H1 (cell line): ENCODE measurements at regions of chr12 and their contacts with region 1.

Region 1: GRCh38 chr12:124140944-124141486 is 153.9 kb upstream of the RFLNA start:
- DNase-seq: peak in 1 of 2 experiments; percentile 53
- H3K4me3 ChIP-seq: peak overlapping the region in 1 of 4 experiments; percentile 31; a peak in 2 of 8 replicates
- H3K27ac ChIP-seq: peak overlapping the region; percentile 79
- H3K4me1 ChIP-seq: peaks cover 5 to 27% (median 15%) of the 10 kb centered on the region in 4 experiments; a peak in 5 of 7 replicates
- H3K27me3 ChIP-seq: no peaks in the 10 kb centered on the region
- CTCF ChIP-seq: no peak
- EP300 ChIP-seq: peak in 1 of 2 experiments; percentile 89; a peak in 1 of 3 replicates
- POLR2A ChIP-seq: peak in 1 of 2 experiments; percentile 68; a peak in 2 of 3 replicates
- RAD21 ChIP-seq: peak in 1 of 2 experiments; percentile 24; a peak in 2 of 4 replicates

Region 2: GRCh38 chr12:124130717-124131670 is 10.0 kb before region 1 on chr12:
- CTCF ChIA-PET with region 1: interaction called, 4 read pairs
- POLR2A ChIA-PET with region 1: interaction called, 32 read pairs
- DNase-seq: peak in 1 of 2 experiments; percentile 62
- H3K4me3 ChIP-seq: no peak overlapping the region; a peak in 2 of 8 replicates
- H3K27ac ChIP-seq: no peak overlapping the region
- H3K4me1 ChIP-seq: peaks cover 3 to 14% (median 8%) of the 10 kb centered on the region in 4 experiments; a peak in 6 of 7 replicates
- H3K27me3 ChIP-seq: no peaks in the 10 kb centered on the region; a peak in 1 of 7 replicates
- CTCF ChIP-seq: no peak
- EP300 ChIP-seq: no peak
- POLR2A ChIP-seq: no peak
- RAD21 ChIP-seq: no peak